ENCODE measurements at regions of chr10 and their contacts with region 1.

Region 1: DNA sequence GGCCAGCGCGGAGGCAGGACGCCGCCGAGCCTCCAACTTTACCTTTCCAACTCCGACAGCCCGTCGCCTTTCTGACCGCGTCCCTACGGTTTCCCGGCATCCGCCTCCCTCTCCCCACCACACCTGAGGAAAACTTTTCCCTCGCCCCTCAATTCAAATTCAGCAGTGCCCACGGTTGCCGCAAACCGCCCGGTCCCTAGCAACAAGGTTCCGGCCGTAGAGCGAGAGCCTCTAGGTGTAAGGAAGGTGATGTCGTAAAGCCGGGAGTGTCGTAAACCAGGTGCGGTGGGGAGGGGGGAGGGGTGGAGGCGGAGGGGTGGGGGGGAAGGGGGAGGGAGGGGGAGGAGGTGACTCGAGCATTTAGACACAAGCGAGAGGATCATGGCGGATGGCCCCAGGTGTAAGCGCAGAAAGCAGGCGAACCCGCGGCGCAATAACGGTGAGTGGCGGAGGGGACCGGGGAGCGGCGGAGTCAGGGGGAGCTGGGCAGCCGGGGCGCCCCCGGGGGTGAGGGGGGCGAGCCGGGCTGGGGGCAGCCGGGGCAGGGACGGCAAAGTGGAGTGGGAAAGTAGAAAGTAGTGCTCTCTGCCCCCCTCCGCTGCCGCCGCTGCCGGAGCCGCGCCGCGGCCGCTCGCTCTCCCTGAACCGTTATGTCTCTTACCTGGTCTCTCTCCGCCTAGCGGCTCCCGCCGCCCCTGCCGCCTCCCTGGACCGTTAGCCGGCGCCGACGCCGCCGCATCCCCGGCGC is at the start of gene ZEB1:
- DNase-seq: peak; percentile 76 to 93
- ATAC-seq: peak; percentile 64 to 89 (median 72)
- H3K4me3 ChIP-seq: peak within 1 kb of the TSS; percentile 84 to 96 (median 92)
- H3K27ac ChIP-seq: peak within 1 kb of the TSS; percentile 89 to 99 (median 97)
- H3K4me1 ChIP-seq: peaks cover 0 to 58% (median 27%) of the 10 kb centered on the region in 9 donors
- H3K27me3 ChIP-seq: peaks cover 0 to 22% (median 0%) of the 10 kb centered on the region in 7 donors
- CTCF ChIP-seq: peak; percentile 26 to 67 (median 54)
- total RNA-seq, gene ZEB1: 87.4 to 125 (median 102) TPM

Region 2: GRCh38 chr10:30775779-30776591 is 543.0 kb before region 1 on chr10:
- intact Hi-C with region 1: loop called in 5 of 10 experiments (anchors 5 to 10 kb)
- DNase-seq: no peak
- ATAC-seq: peak in 5 of 8 donors; percentile 64 to 87 (median 81)
- H3K4me3 ChIP-seq: no peak overlapping the region
- H3K27ac ChIP-seq: peak overlapping the region in 4 of 10 donors; percentile 25 to 84 (median 56)
- H3K4me1 ChIP-seq: peaks cover 0 to 6% (median 0%) of the 10 kb centered on the region in 9 donors
- H3K27me3 ChIP-seq: peaks cover 0 to 4% (median 0%) of the 10 kb centered on the region in 7 donors
- CTCF ChIP-seq: no peak

Region 3: GRCh38 chr10:31133628-31134302 is 185.3 kb before region 1 on chr10:
- intact Hi-C with region 1: loop called in 1 of 10 experiments (anchors 10 kb)
- DNase-seq: peak; percentile 89 to 90
- ATAC-seq: peak; percentile 91 to 96 (median 94)
- H3K4me3 ChIP-seq: peak overlapping the region; percentile 11 to 58 (median 51)
- H3K27ac ChIP-seq: peak overlapping the region; percentile 65 to 93 (median 90)
- H3K4me1 ChIP-seq: peaks cover 6 to 38% (median 29%) of the 10 kb centered on the region in 9 donors
- H3K27me3 ChIP-seq: no peaks in the 10 kb centered on the region
- CTCF ChIP-seq: no peak

Region 4: GRCh38 chr10:31242902-31243301 is 76.1 kb before region 1 on chr10:
- intact Hi-C with region 1: no loop called
- DNase-seq: peak in 1 of 2 donors; percentile 9
- ATAC-seq: peak in 5 of 8 donors; percentile 31 to 92 (median 71)
- H3K4me3 ChIP-seq: no peak overlapping the region
- H3K27ac ChIP-seq: no peak overlapping the region
- H3K4me1 ChIP-seq: peaks cover 0 to 12% (median 0%) of the 10 kb centered on the region in 9 donors
- H3K27me3 ChIP-seq: no peaks in the 10 kb centered on the region
- CTCF ChIP-seq: no peak

Region 5: GRCh38 chr10:31399631-31400030 is 80.6 kb after region 1 on chr10:
- intact Hi-C with region 1: loop called in 1 of 10 experiments (anchors 5 kb)
- DNase-seq: peak; percentile 27 to 51
- ATAC-seq: peak; percentile 78 to 98 (median 92)
- H3K4me3 ChIP-seq: peak overlapping the region in 4 of 10 donors; percentile 0 to 10 (median 2)
- H3K27ac ChIP-seq: peak overlapping the region in 8 of 10 donors; percentile 32 to 77 (median 68)
- H3K4me1 ChIP-seq: peaks cover 0 to 98% (median 72%) of the 10 kb centered on the region in 9 donors
- H3K27me3 ChIP-seq: no peaks in the 10 kb centered on the region
- CTCF ChIP-seq: no peak

Region 6: DNA sequence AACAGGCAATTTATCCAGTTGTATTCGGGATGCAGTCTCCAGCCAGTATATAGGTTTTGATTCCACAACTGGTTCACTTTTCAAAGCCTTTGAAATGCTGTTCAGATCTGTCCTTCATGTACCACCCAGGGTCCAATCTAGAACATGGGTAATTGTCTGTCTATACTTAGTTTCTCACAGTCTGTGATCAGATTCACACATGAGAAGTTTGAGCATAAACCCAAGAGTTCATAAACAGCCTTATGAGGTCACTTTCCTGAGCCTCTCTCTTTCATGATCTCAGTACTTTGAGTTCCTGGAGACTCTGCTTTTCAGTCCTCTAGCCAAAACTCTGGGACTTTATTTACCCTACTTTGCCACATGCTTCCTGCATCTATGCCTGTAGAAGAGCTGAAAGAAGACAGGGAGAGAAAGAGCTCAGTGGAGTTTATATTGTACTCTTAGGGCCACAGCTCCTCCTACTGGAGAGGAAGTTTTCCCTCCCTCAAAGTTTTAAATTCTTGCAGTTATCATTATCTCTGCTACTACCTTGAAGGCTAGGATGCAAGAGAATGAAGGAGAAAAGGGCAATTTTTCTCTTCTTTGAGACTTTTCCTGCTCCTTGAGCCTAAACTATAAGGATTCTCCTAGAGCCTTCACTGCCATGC is 172.0 kb after region 1 on chr10:
- intact Hi-C with region 1: loop called in 5 of 10 experiments (anchors 2 to 10 kb)
- DNase-seq: peak in 1 of 2 donors; percentile 23
- ATAC-seq: peak in 6 of 8 donors; percentile 41 to 65 (median 51)
- H3K4me3 ChIP-seq: no peak overlapping the region
- H3K27ac ChIP-seq: no peak overlapping the region
- H3K4me1 ChIP-seq: no peaks in the 10 kb centered on the region
- H3K27me3 ChIP-seq: no peaks in the 10 kb centered on the region
- CTCF ChIP-seq: peak; percentile 27 to 68 (median 60)

Region 7: DNA sequence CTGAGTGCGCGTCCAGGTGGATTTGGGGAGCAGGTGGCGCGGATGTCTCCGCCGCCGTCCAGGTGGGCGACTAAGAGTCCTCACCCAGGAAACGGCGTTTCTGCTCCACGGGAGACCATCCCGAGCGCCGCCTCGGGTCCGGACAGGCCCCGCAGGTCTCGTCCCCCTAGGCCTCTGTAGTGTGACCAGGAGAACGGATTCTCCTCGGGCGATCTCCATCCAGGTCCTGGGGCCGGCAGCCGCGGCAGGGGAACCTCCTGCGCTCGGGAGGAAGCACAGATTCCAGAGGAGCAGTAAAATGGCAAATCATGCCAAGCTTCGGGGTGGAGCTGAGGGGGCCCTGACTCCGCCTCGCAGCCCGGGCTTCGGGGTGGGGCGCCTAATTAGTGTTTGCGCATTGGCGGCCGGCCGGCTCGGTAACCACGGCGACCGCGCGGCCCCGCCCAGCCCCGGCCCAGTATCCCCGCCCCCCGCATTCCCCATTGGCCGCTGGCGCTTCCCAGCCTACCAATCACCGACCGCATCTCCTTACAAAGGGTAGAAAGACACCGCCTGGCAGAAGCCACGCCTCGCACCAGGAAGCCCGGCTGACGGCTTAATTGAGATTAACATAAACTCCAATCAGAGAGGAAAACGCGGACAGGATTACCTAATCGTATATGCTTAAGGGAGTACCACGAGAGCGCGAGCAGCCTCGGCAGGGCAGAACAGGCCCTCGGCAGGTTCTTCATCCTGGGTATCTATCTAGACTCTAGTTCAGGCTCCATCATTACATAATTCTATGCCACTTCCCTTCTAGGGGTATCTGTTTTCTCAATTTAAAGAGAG is 441.0 kb after region 1 on chr10:
- intact Hi-C with region 1: loop called in 1 of 10 experiments (anchors 5 kb)
- DNase-seq: peak; percentile 95 to 97
- ATAC-seq: peak; percentile 93 to 97 (median 96)
- H3K4me3 ChIP-seq: peak overlapping the region; percentile 72 to 95 (median 88)
- H3K27ac ChIP-seq: peak overlapping the region; percentile 89 to 99 (median 98)
- H3K4me1 ChIP-seq: peaks cover 2 to 45% (median 30%) of the 10 kb centered on the region in 9 donors
- H3K27me3 ChIP-seq: no peaks in the 10 kb centered on the region
- CTCF ChIP-seq: peak in 1 of 9 donors; percentile 9